Calu3 (cell line): ENCODE measurements at regions of chr14 and their contacts with region 1.

Region 1: GRCh38 chr14:95442633-95443021 is 73.8 kb downstream of the SYNE3 start:
- DNase-seq: peak; percentile 86
- H3K4me3 Mint-ChIP-seq: no peak overlapping the region
- H3K27ac Mint-ChIP-seq: no peak overlapping the region
- H3K4me1 Mint-ChIP-seq: no peaks in the 10 kb centered on the region
- H3K27me3 Mint-ChIP-seq: no peaks in the 10 kb centered on the region
- CTCF ChIP-seq: peak; percentile 77

Region 2: DNA sequence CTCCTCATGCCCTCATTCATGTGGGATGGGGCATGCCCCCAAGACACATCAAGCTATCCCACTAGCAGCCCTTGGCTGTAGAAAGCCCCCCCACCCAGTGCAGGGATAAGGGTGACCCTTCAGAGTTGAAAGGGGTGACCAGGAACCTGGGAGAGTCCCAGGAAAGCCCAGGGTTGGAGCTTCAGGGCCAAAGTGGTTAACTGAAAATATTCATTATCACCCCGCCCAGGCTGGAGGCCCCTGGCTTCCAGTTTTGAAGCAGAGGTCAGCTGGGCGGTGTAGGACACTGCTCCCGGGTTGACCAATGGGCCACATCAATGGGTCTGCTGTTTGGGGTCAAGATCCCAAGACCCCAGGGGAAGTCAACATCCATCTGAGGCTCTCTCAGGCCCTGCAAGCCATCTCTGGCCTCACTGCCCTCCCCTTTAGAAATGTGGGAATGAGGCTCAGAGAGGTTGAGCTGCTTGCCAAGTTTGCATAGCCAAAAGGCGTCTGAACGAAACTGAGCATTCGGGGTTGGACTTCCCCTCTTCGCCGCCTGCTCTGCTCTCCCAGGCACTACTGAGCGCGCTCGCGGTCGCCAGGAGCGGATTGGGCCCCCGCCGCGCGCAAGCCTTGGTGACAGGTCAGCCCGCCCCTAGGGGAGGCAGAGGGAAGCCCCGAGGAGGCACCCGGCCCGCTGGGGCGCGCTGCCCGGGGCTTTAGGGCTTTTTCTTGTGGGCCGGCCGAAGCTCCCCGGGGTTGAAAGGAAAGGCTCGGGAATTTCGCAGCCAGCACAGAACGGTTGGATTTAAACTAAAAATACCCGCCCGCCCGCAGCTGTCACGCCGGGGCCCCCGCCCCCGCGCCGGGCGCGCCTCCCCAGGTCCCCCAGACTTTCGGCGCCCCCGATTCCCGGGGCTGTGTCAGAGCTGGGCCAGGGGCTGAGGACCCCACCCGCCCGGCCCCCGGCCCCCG is 73.2 kb after region 1 on chr14:
- CTCF ChIA-PET with region 1: interaction called, 13 read pairs
- intact Hi-C with region 1: no loop called
- DNase-seq: peak; percentile 66
- H3K4me3 Mint-ChIP-seq: peak overlapping the region; percentile 64
- H3K27ac Mint-ChIP-seq: no peak overlapping the region
- H3K4me1 Mint-ChIP-seq: peaks cover 18% of the 10 kb centered on the region
- H3K27me3 Mint-ChIP-seq: no peaks in the 10 kb centered on the region
- CTCF ChIP-seq: peak; percentile 37

Region 3: GRCh38 chr14:95527387-95528002 is 84.9 kb after region 1 on chr14:
- CTCF ChIA-PET with region 1: interaction called, 19 read pairs
- intact Hi-C with region 1: loop called (anchors 1 kb)
- DNase-seq: peak; percentile 45
- H3K4me3 Mint-ChIP-seq: no peak overlapping the region
- H3K27ac Mint-ChIP-seq: no peak overlapping the region
- H3K4me1 Mint-ChIP-seq: peaks cover 66% of the 10 kb centered on the region
- H3K27me3 Mint-ChIP-seq: no peaks in the 10 kb centered on the region
- CTCF ChIP-seq: peak; percentile 51

Region 4: DNA sequence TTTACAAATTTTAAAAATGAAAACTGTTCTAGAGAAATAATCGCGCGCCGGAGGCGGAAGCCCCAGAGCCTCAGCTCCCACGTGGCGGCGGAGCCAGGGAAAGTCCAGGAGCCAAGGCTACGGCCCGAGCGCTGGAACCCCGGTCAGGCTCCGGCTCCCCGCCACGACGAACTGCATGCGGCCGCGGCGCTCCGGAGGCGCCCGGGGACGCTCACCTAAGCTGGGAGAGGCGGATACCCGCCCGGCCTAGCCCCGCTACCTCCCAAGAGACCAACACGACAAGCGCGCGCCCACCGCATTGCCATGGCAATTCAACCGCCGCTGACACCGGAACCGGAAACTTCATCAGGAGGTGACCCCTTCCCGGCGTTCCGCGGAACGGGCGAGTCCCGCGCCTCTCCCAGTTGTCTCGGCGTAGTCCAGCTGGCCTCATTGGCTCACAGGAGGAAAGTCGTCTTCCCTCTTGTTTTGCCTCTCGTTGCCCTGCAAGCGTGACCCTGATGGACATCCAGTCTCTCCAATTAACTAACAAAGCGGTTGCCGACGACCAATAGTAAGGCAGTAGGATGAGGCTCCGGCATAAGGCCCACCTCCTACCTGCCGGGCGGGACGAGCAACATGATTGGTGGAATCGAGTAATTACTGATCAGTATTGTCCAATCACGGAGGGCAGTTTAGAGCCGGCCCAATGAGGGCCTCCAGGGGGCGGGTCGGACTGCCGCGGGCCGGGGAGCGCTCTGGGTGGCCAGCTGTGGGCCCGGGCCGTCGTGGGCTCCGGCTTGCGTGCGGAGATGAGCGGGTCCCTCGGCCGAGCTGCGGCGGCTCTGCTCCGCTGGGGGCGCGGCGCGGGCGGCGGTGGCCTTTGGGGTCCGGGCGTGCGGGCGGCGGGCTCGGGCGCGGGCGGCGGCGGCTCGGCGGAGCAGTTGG is 91.9 kb after region 1 on chr14 and contains the start of gene GLRX5:
- CTCF ChIA-PET with region 1: interaction called, 12 read pairs
- intact Hi-C with region 1: no loop called
- DNase-seq: peak; percentile 97
- H3K4me3 Mint-ChIP-seq: peak within 1 kb of the TSS; percentile 82
- H3K27ac Mint-ChIP-seq: peak within 1 kb of the TSS; percentile 97
- H3K4me1 Mint-ChIP-seq: peaks cover 53% of the 10 kb centered on the region
- H3K27me3 Mint-ChIP-seq: no peaks in the 10 kb centered on the region
- CTCF ChIP-seq: no peak
- total RNA-seq, gene GLRX5: 54.8 and 58.0 TPM in 2 replicates